Mammary epithelial cell (primary cell): ENCODE measurements at regions of chr15 and their contacts with region 1.

Region 1: DNA sequence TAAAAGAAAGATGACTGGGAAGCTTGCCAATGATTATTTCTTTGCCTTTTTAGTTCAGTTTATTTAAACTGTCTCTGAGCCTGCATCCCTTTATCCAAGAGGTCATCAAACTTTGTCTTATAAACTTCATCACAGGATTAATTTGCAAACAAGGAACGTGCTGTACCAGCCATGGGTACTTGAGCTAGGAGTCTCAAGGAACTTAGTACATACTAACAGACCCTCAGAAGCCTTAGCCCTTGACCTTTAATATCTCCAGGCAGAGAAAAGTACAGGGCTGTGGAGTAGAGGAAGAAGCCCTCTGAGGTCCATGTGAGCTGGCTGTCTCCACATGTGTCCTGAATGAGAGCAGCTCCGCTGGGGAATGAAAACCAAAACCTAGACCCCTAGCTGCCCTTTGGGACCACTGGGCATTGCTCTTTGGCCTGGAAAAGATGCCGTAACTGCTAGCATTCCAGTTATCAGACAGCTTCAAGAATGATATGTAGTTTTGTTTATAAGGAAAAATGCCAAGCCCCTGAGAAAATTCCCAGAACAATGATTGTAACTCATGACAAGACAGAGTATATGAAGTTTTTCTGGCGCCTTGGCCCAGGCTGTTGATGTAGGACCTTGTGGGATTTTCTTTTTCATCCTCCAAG is 92.1 kb downstream of the ASB7 start:
- DNase-seq: no peak
- H3K4me3 ChIP-seq: no peak overlapping the region
- H3K27ac ChIP-seq: no peak overlapping the region
- H3K4me1 ChIP-seq: no peaks in the 10 kb centered on the region
- H3K27me3 ChIP-seq: no peaks in the 10 kb centered on the region
- CTCF ChIP-seq: no peak

Region 2: DNA sequence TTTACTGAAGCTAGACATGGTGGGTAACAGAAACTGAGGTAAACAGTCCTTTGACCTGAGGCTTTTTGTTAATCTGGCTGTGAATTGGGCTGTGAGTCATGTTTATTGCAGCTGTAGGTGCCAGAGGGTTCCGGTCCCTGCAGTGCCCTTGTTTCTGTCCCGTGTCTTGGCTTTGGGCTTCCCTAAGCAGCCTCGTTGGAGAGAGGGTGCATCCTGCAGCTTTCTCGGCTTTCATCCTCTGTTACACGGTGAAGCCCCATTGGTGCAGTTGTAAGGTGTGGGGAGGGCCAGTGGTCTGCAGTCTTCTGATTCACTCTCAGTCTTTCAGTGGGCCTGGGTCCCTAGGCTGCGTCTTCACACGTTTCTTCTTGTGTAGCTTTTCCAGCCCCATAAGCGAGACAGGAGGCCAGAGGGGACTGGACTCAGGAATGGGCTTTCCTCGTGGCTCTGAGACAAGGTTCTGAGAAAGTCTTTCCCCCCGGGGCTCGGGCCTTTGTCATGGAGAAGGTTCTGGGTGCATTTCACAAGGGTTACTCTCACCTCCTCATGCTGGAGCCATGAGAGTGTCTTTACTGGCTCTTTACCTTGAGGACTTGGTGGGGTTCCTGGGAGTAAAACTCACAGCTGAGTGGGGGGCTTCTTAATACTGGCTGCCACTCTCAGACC is 59.0 kb before region 1 on chr15:
- CTCF ChIA-PET with region 1: no interaction called
- dilution Hi-C with region 1: loop called (anchors 5 kb)
- in situ Hi-C with region 1: no loop called
- intact Hi-C with region 1: no loop called
- DNase-seq: no peak
- H3K4me3 ChIP-seq: no peak overlapping the region
- H3K27ac ChIP-seq: no peak overlapping the region
- H3K4me1 ChIP-seq: peaks cover 10% of the 10 kb centered on the region
- H3K27me3 ChIP-seq: no peaks in the 10 kb centered on the region
- CTCF ChIP-seq: no peak